ENCODE measurements at regions of chr1 and their contacts with region 1.

Region 1: GRCh38 chr1:225881969-225882693 is at the start of gene TMEM63A:
- DNase-seq: peak; percentile 85 to 94
- ATAC-seq: peak; percentile 79 to 85 (median 83)
- H3K4me3 ChIP-seq: peak within 1 kb of the TSS; percentile 99
- H3K4me3 Mint-ChIP-seq: peak within 1 kb of the TSS; percentile 91
- H3K27ac ChIP-seq: peak within 1 kb of the TSS; percentile 91
- H3K27ac Mint-ChIP-seq: peak within 1 kb of the TSS; percentile 72 to 83
- H3K4me1 ChIP-seq: peaks cover 60% of the 10 kb centered on the region
- H3K4me1 Mint-ChIP-seq: peaks cover 38 to 57% of the 10 kb centered on the region in 2 donors
- H3K27me3 ChIP-seq: no peaks in the 10 kb centered on the region
- H3K27me3 Mint-ChIP-seq: peaks cover 5 to 9% of the 10 kb centered on the region in 2 donors
- CTCF ChIP-seq: no peak
- total RNA-seq, gene TMEM63A: 101 to 166 (median 113) TPM

Region 2: GRCh38 chr1:225612287-225612686 is 269.8 kb before region 1 on chr1:
- intact Hi-C with region 1: no loop called
- DNase-seq: no peak
- ATAC-seq: no peak
- H3K4me3 ChIP-seq: no peak overlapping the region
- H3K4me3 Mint-ChIP-seq: no peak overlapping the region
- H3K27ac ChIP-seq: no peak overlapping the region
- H3K27ac Mint-ChIP-seq: no peak overlapping the region
- H3K4me1 ChIP-seq: no peaks in the 10 kb centered on the region
- H3K4me1 Mint-ChIP-seq: no peaks in the 10 kb centered on the region
- H3K27me3 ChIP-seq: no peaks in the 10 kb centered on the region
- H3K27me3 Mint-ChIP-seq: no peaks in the 10 kb centered on the region
- CTCF ChIP-seq: no peak

Region 3: DNA sequence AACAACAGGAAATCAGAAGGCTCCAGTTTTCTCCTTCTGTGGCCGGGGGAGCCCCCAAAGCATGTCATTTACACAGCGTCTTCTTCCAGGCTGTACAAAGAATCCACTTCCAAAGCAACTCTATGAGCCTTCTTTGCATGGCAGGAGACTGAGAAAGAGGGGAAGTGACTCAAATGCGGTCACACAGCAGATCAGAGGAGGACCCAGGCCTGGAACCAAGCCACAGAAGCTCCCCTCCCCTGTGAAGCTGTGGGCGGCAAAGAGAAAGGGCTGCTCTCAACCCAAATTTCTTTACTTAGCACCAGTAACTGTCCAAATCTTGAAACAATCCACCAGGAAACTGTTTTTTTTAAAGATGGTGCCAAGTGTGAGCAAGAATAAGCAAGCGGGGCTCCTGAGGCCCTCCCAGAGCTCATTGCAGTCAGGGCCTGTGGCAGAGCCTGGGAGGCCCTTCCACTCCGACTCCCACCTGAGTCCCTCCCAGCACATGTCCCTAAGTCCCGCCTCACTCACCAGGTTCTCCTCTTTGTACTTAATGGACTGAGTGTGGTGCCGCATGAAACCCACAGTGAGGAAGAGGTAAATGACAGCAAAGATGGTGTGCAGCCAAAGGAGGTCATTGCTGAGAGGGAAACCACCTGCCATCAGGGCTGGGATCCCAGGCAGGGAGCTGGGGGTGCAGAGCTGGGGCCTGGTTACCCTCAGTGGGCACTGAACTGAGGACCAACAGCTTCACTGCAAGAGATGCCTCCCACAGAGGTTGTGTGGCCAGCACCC is 15.9 kb before region 1 on chr1:
- intact Hi-C with region 1: loop called (anchors 2 kb)
- DNase-seq: peak in 1 of 2 donors; percentile 83
- ATAC-seq: peak; percentile 71 to 90 (median 87)
- H3K4me3 ChIP-seq: no peak overlapping the region
- H3K4me3 Mint-ChIP-seq: peak overlapping the region; percentile 19
- H3K27ac ChIP-seq: no peak overlapping the region
- H3K27ac Mint-ChIP-seq: peak overlapping the region; percentile 57 to 86
- H3K4me1 ChIP-seq: peaks cover 29% of the 10 kb centered on the region
- H3K4me1 Mint-ChIP-seq: peaks cover 26 to 32% of the 10 kb centered on the region in 2 donors
- H3K27me3 ChIP-seq: no peaks in the 10 kb centered on the region
- H3K27me3 Mint-ChIP-seq: no peaks in the 10 kb centered on the region
- CTCF ChIP-seq: no peak

Region 4: DNA sequence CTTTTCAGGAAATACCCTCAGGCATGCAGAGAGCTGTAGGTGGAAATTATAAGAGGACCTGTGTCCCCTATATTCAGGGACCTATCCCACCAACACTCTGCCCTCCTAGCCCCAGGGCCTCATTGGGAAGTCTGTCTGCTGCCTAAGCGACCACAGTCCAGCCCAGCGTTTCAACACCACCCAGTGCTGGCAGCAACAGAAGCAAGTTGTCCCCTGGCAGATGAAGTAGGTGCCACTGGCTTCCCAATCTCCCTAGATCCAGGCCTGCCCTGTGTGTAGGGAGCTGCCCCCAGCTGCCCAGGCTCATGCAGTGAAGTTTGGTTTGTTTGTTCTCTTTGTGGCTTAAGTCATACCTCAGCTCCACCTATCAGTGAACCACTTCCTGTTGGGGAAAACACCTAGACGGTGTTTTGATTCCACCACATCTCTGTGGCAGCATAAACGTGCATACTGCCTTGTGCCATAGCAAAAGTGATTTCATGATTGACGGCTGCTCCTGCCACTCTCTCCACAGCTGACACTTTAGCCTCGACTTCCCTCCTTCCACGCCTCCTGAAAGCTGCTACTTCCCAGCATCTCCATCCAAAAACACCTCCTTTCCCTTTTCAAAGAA is 14.9 kb after region 1 on chr1:
- intact Hi-C with region 1: loop called (anchors 1 kb)
- DNase-seq: peak; percentile 48 to 94
- ATAC-seq: peak; percentile 95 to 99 (median 97)
- H3K4me3 ChIP-seq: no peak overlapping the region
- H3K4me3 Mint-ChIP-seq: peak overlapping the region; percentile 75
- H3K27ac ChIP-seq: peak overlapping the region; percentile 81
- H3K27ac Mint-ChIP-seq: peak overlapping the region; percentile 84 to 87
- H3K4me1 ChIP-seq: peaks cover 34% of the 10 kb centered on the region
- H3K4me1 Mint-ChIP-seq: peaks cover 22 to 25% of the 10 kb centered on the region in 2 donors
- H3K27me3 ChIP-seq: no peaks in the 10 kb centered on the region
- H3K27me3 Mint-ChIP-seq: peaks cover 0 to 6% of the 10 kb centered on the region in 2 donors
- CTCF ChIP-seq: no peak